Activated T-helper 1 cell treated with anti-CD3 and anti-CD28 coated beads, Interleukin-12 subunit alpha, Interleukin-12 subunit beta, Interleukin-2, Interleukin-4 antibody, amounts not matched to agents 30 ng/mL and 10 ng/mL and 1 ng/mL, durations not matched to agents 14 hours and 24 hours and 36 hours (primary cell): ENCODE measurements at regions of chrX and their contacts with region 1.

Region 1: DNA sequence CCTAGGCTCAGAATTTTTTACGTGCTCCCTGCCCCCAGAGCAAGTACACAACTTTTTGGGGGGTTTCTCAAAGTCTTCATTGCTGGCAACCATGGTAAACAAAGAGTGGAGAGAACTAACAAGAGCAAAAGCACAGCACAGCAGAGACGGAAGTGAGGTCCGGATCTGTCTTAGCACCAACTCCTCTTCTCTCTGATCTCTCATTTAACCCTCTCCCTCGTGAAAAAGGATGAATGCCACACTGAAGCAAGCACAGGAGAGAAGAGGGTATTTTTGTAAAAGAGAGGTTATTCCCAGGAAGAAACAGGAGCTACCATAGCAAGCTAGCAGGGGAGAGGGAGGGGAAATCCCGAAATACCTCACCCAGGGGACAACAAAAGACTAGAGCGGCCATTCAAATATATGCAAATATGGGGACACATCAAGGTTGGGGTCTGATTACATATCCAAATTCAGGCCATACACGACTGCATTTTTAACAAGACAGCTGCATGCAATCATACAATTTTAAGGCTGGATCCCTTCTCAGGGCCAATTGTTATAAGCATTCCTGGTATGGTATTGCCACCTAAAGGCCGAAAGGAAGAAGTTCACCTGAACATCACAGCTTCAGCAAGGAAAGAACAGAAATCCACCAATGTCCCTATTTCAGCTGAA is 46.6 kb downstream of the CD40LG start:
- DNase-seq: no peak
- H3K4me3 Mint-ChIP-seq: peak overlapping the region; percentile 80
- H3K27ac Mint-ChIP-seq: peak overlapping the region; percentile 99
- H3K4me1 Mint-ChIP-seq: peaks cover 70% of the 10 kb centered on the region
- H3K27me3 Mint-ChIP-seq: no peaks in the 10 kb centered on the region

Region 2: DNA sequence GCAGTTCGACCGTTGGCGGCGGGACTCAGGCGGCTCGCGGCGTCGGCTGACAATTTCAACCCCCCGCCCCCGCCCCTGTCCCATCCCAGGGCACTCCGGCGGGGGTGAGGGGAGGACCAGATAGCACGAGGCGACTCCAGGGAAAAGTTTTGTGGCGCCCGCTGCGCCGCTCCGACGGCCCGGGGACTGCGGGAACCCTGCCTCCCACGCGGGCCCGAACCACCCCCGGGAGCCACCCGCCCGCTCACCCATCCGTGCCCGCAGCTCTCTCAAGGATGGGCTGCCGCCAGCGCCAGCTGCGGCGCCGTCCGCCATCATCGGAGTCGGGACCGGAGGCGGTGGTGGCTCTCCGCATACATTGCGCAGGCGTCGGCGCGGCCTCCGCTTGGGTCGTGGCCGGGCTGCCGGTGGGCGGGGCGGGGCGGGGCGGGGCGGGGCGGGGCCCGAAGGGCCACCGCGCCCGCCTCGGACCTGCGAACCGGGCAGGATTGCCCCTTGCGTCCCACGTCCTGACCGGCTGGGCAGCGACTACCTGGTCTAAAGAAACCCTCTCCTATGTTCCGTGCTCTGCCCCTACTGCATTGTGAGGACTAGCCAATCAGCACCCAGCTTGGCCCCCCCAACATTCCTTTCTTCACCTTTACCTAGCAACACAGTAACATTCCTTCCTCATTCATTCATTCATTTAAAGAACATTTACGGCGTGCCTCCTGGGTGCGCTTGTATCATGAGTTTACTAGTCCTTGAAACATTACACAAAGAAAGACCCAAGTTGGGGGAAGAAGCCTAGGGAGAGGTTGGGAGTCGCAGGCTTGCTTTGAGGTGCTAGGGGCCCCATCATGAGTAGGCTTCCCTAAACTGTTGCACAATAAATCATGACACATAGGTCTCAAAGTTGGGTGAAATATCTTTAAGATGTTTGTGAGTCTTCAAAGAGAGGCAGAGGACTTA is 443.2 kb before region 1 on chrX and contains the start of gene MAP7D3:
- intact Hi-C with region 1: loop called (anchors 10 kb)
- DNase-seq: peak; percentile 61
- H3K4me3 Mint-ChIP-seq: peak within 1 kb of the TSS; percentile 87
- H3K27ac Mint-ChIP-seq: peak within 1 kb of the TSS; percentile 94
- H3K4me1 Mint-ChIP-seq: peaks cover 16% of the 10 kb centered on the region
- H3K27me3 Mint-ChIP-seq: no peaks in the 10 kb centered on the region
- total RNA-seq, gene MAP7D3: 27.3 and 29.1 TPM in 2 replicates

Region 3: GRCh38 chrX:136572030-136572429 is 122.5 kb before region 1 on chrX:
- intact Hi-C with region 1: loop called (anchors 1 kb)
- DNase-seq: no peak
- H3K4me3 Mint-ChIP-seq: no peak overlapping the region
- H3K27ac Mint-ChIP-seq: no peak overlapping the region
- H3K4me1 Mint-ChIP-seq: peaks cover 19% of the 10 kb centered on the region
- H3K27me3 Mint-ChIP-seq: no peaks in the 10 kb centered on the region

Region 4: GRCh38 chrX:136588041-136588788 is 106.3 kb before region 1 on chrX:
- intact Hi-C with region 1: loop called (anchors 1 kb)
- DNase-seq: no peak
- H3K4me3 Mint-ChIP-seq: peak overlapping the region; percentile 4
- H3K27ac Mint-ChIP-seq: peak overlapping the region; percentile 89
- H3K4me1 Mint-ChIP-seq: peaks cover 59% of the 10 kb centered on the region
- H3K27me3 Mint-ChIP-seq: no peaks in the 10 kb centered on the region

Region 5: GRCh38 chrX:136616987-136617685 is 77.4 kb before region 1 on chrX:
- intact Hi-C with region 1: loop called (anchors 2 kb)
- DNase-seq: no peak
- H3K4me3 Mint-ChIP-seq: peak overlapping the region; percentile 47
- H3K27ac Mint-ChIP-seq: peak overlapping the region; percentile 85
- H3K4me1 Mint-ChIP-seq: peaks cover 53% of the 10 kb centered on the region
- H3K27me3 Mint-ChIP-seq: no peaks in the 10 kb centered on the region

Region 6: DNA sequence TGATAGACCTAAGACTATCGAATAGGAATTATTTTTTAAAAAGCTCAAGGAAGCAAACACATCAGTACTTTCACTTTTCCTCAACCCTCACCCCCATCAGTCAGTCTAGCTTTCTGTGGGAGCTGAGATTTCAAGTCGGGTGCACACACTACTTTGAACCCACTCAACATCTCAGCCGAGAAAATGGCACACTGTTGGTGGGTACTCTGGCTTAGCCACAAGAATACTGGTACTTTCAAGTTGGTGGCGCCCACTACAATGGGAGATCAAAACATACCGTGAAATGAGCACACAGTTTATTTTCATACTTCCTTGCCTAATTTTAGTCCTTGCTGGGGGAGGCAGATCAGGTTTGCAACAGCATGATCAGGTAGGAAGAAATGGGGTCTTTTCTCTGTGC is 36.4 kb before region 1 on chrX:
- intact Hi-C with region 1: loop called (anchors 1 kb)
- DNase-seq: no peak
- H3K4me3 Mint-ChIP-seq: peak overlapping the region; percentile 99
- H3K27ac Mint-ChIP-seq: peak overlapping the region; percentile 94
- H3K4me1 Mint-ChIP-seq: peaks cover 89% of the 10 kb centered on the region
- H3K27me3 Mint-ChIP-seq: no peaks in the 10 kb centered on the region